ENCODE measurements at regions of chr4 and their contacts with region 1.

Region 1: DNA sequence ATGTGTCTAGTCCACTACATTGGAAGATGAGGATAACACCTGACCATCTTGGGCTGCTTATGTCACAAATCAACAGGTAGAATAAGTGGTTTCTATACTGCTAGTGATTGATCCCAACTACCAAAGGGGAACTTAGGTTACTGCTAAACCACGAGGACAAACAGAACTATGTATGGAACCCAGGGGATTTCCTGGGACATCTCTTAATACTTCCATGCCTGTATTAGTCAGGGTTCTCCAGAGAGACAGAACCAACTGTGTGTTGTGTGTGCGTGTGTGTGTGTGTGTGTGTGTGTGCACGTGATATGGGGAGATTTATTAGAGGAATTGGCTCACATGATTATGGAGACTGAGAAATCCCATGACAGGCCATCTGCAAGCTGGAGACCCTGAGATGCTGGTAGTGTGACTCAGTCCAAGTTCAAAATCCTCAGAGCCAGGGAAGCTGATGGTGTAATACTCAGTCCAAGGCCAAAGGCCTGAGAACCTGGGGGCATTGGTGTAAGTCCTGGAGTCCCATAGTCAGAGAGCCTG is 16.2 kb upstream of the AFF1 start:
- DNase-seq: no peak
- ATAC-seq: peak; percentile 53
- H3K4me3 ChIP-seq: no peak overlapping the region
- H3K27ac ChIP-seq: no peak overlapping the region
- H3K4me1 ChIP-seq: peaks cover 3% of the 10 kb centered on the region; the same call in 1 of the 2 replicates
- H3K27me3 ChIP-seq: no peaks in the 10 kb centered on the region
- CTCF ChIP-seq: no peak
- EP300 ChIP-seq: no peak
- POLR2A ChIP-seq: no peak
- RAD21 ChIP-seq: no peak

Region 2: GRCh38 chr4:86908251-86908657 is 10.4 kb before region 1 on chr4:
- CTCF ChIA-PET with region 1: interaction called, 38 read pairs
- POLR2A ChIA-PET with region 1: interaction called, 3 read pairs
- RAD21 ChIA-PET with region 1: interaction called, 5 read pairs
- SMC1A ChIA-PET with region 1: interaction called, 8 read pairs
- in situ Hi-C with region 1: no loop called
- intact Hi-C with region 1: no loop called
- DNase-seq: no peak
- ATAC-seq: peak; percentile 53
- H3K4me3 ChIP-seq: no peak overlapping the region
- H3K27ac ChIP-seq: peak overlapping the region; percentile 8; the same call in 1 of the 2 replicates
- H3K4me1 ChIP-seq: peaks cover 18% of the 10 kb centered on the region
- H3K27me3 ChIP-seq: no peaks in the 10 kb centered on the region
- CTCF ChIP-seq: no peak
- EP300 ChIP-seq: no peak
- POLR2A ChIP-seq: no peak
- RAD21 ChIP-seq: no peak

Region 3: DNA sequence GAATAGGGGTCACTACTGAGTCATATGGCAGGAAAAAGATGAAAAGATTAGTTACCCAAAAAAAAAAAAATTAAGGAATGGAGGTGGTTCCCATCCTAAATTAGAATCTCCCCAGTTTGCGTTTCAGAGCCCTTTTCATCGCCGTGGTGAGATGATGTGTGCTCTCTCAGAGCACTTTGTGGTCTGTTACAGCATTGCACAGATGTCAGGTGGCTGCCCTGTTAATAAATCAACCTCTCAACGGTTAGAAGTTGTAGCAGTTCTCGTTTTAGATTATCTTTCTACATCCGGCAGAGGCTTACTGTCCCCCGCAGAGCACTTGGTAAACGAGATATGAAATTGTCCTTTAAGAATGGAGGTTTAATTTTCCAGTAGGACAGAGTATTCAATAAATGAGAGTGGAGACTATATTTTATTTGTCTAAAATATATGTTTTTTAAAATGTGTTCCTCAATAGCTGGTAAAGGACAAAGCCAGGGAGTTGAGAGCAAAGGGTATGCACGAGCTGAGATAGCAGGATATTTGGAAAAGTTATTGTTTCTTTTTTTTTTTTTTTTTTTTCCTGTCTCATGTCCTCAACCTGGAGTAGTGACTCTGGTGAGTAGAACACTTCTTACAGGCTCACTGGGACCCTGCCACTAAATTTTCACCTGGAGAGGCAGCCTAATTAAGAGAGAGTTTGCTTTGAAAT is 43.1 kb after region 1 on chr4:
- CTCF ChIA-PET with region 1: interaction called, 12 read pairs
- POLR2A ChIA-PET with region 1: no interaction called
- RAD21 ChIA-PET with region 1: interaction called, 23 read pairs
- SMC1A ChIA-PET with region 1: interaction called, 5 read pairs
- in situ Hi-C with region 1: no loop called
- intact Hi-C with region 1: no loop called
- DNase-seq: peak; percentile 85
- ATAC-seq: peak; percentile 92
- H3K4me3 ChIP-seq: peak overlapping the region; percentile 61; the same call in 1 of the 2 replicates
- H3K27ac ChIP-seq: peak overlapping the region; percentile 80
- H3K4me1 ChIP-seq: peaks cover 70% of the 10 kb centered on the region
- H3K27me3 ChIP-seq: no peaks in the 10 kb centered on the region
- CTCF ChIP-seq: no peak
- EP300 ChIP-seq: peak; percentile 79 to 84; a peak in 3 of 4 replicates
- POLR2A ChIP-seq: peak; percentile 63
- RAD21 ChIP-seq: no peak

Region 4: GRCh38 chr4:87026800-87027495 is 108.3 kb after region 1 on chr4:
- CTCF ChIA-PET with region 1: interaction called, 11 read pairs
- POLR2A ChIA-PET with region 1: no interaction called
- RAD21 ChIA-PET with region 1: interaction called, 11 read pairs
- SMC1A ChIA-PET with region 1: interaction called, 7 read pairs
- in situ Hi-C with region 1: no loop called
- intact Hi-C with region 1: no loop called
- DNase-seq: peak; percentile 91
- ATAC-seq: peak; percentile 92
- H3K4me3 ChIP-seq: peak overlapping the region; percentile 8; the same call in 1 of the 2 replicates
- H3K27ac ChIP-seq: peak overlapping the region; percentile 98
- H3K4me1 ChIP-seq: peaks cover 46% of the 10 kb centered on the region
- H3K27me3 ChIP-seq: no peaks in the 10 kb centered on the region
- CTCF ChIP-seq: no peak
- EP300 ChIP-seq: peak; percentile 68 to 73; a peak in 2 of 4 replicates
- POLR2A ChIP-seq: no peak
- RAD21 ChIP-seq: peak; percentile 30; the same call in 1 of the 2 replicates

Region 5: GRCh38 chr4:87078987-87079486 is 160.4 kb after region 1 on chr4:
- CTCF ChIA-PET with region 1: interaction called, 8 read pairs
- POLR2A ChIA-PET with region 1: no interaction called
- RAD21 ChIA-PET with region 1: interaction called, 11 read pairs
- SMC1A ChIA-PET with region 1: interaction called, 12 read pairs
- in situ Hi-C with region 1: no loop called
- intact Hi-C with region 1: no loop called
- DNase-seq: no peak
- ATAC-seq: no peak
- H3K4me3 ChIP-seq: no peak overlapping the region
- H3K27ac ChIP-seq: no peak overlapping the region
- H3K4me1 ChIP-seq: peaks cover 9% of the 10 kb centered on the region; the same call in 1 of the 2 replicates
- H3K27me3 ChIP-seq: no peaks in the 10 kb centered on the region
- CTCF ChIP-seq: no peak
- EP300 ChIP-seq: no peak
- POLR2A ChIP-seq: no peak
- RAD21 ChIP-seq: no peak

Region 6: GRCh38 chr4:87133183-87133582 is 214.6 kb after region 1 on chr4:
- CTCF ChIA-PET with region 1: interaction called, 15 read pairs
- POLR2A ChIA-PET with region 1: no interaction called
- RAD21 ChIA-PET with region 1: no interaction called
- SMC1A ChIA-PET with region 1: interaction called, 7 read pairs
- in situ Hi-C with region 1: no loop called
- intact Hi-C with region 1: no loop called
- DNase-seq: no peak
- ATAC-seq: no peak
- H3K4me3 ChIP-seq: no peak overlapping the region
- H3K27ac ChIP-seq: no peak overlapping the region
- H3K4me1 ChIP-seq: no peaks in the 10 kb centered on the region
- H3K27me3 ChIP-seq: no peaks in the 10 kb centered on the region
- CTCF ChIP-seq: no peak
- EP300 ChIP-seq: no peak
- POLR2A ChIP-seq: no peak
- RAD21 ChIP-seq: no peak

Measured in GM12878 (cell line).